ENCODE measurements at regions of chr2 and their contacts with region 1.

Region 1: DNA sequence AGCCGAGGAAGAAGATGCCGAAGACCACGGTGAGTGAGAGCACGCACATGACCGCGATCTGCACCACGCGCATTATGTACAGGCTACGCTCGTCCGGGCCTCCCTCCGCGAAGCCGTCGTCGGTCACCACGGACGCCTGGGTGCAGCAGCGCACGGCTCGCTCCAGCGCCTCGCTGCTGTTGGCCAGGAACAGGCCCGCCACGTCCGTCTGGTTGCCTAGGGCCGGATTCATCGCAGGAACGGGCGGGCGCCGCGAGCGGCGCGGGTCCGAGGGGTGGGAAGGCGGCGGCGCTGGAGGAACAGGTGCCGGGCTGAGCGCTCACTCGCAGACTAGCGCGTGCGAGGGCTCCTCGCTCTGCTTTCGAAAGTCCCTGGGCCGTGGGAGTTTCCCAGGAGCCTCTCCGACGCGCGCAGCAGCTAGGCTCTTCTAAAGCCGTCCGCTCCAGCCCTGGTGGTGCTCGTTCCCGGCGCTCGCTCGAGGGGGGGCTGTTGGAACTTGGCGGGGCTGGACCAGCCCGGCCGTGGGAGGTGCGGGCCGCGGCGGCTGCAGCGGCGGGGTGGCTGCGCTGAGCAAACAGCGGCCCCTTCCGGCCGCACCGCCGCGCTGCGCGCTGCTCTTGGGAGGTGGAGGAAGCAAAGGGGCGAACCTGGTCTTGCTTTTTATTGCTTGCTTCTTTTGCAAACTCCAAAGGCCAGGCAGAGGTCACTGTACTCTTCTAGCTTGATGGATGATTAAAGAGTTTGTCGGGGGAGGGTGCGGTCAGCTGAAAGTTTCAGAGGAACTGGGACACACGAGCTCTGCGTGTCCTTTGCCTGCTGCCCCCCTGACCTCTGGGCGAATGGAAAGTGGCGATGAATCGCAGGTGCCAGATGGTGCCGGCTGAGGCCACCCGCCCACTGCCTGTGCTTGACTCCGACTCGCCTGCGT is at the start of gene RPRM:
- DNase-seq: peak; percentile 37
- ATAC-seq: peak; percentile 98
- H3K4me3 ChIP-seq: peak within 1 kb of the TSS; percentile 49
- H3K27ac ChIP-seq: no peak within 1 kb of the TSS
- H3K4me1 ChIP-seq: no peaks in the 10 kb centered on the region
- H3K27me3 ChIP-seq: peaks cover 17% of the 10 kb centered on the region
- CTCF ChIP-seq: peak; percentile 80
- POLR2A ChIP-seq: no peak
- RAD21 ChIP-seq: peak; percentile 68
- total RNA-seq, gene RPRM: not detected in 2 replicates

Region 2: GRCh38 chr2:152861349-152861942 is 617.2 kb before region 1 on chr2:
- CTCF ChIA-PET with region 1: no interaction called
- POLR2A ChIA-PET with region 1: no interaction called
- dilution Hi-C with region 1: no loop called
- in situ Hi-C with region 1: no loop called
- intact Hi-C with region 1: loop called (anchors 1 kb)
- DNase-seq: peak; percentile 12
- ATAC-seq: peak; percentile 56; the same call in 1 of the 2 replicates
- H3K4me3 ChIP-seq: no peak overlapping the region
- H3K27ac ChIP-seq: no peak overlapping the region
- H3K4me1 ChIP-seq: no peaks in the 10 kb centered on the region
- H3K27me3 ChIP-seq: no peaks in the 10 kb centered on the region
- CTCF ChIP-seq: peak; percentile 53
- POLR2A ChIP-seq: no peak
- RAD21 ChIP-seq: peak; percentile 19; the same call in 1 of the 2 replicates

Region 3: GRCh38 chr2:154049561-154049960 is 571.0 kb after region 1 on chr2:
- CTCF ChIA-PET with region 1: no interaction called
- POLR2A ChIA-PET with region 1: no interaction called
- dilution Hi-C with region 1: no loop called
- in situ Hi-C with region 1: no loop called
- intact Hi-C with region 1: no loop called
- DNase-seq: no peak
- ATAC-seq: no peak
- H3K4me3 ChIP-seq: no peak overlapping the region
- H3K27ac ChIP-seq: no peak overlapping the region
- H3K4me1 ChIP-seq: no peaks in the 10 kb centered on the region
- H3K27me3 ChIP-seq: no peaks in the 10 kb centered on the region
- CTCF ChIP-seq: no peak
- POLR2A ChIP-seq: no peak
- RAD21 ChIP-seq: no peak

Measured in IMR-90 (cell line).